AG04450 (cell line): ENCODE measurements at regions of chr15 and their contacts with region 1.

Region 1: DNA sequence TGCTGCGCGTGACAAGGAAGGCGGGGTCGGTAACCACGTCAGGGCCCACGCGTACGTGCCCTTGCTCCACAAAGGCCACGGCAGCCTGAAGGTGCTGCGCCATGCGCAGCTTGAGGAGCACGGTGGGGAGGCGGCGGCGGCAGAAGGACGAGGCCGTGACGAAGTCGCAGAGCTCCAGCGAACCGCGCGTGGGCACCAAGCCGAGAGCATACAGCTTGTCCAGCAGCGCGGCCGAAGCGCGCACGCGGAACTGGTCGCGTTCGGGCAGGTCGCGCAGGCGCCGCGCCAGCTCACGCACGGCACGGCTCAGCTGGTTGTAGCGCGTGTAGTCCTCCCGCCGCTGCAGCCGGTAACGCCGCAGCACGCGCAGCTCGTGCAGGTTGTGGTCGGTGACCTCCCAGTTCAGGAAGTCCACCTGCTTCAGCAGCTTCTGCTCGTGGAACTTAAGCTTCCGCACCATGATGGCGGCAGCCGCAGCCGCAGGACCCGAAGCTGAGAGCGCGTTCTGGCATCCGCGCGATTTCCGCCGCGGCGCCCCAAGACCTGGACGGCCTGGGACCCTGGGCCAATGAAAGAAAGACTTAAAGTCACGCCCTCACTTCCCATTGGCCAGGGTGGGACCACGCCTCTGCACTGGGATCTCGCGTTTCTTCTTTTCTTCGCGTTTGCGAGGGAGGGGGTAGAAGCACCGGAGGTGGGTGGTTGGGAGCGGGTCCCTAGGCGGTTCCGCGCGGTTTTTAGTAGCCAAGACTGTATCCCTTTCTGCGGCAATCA is at the start of gene IMP3:
- DNase-seq: peak; percentile 85
- H3K4me3 ChIP-seq: peak within 1 kb of the TSS; percentile 98
- H3K27ac ChIP-seq: peak within 1 kb of the TSS; percentile 85
- H3K27me3 ChIP-seq: no peaks in the 10 kb centered on the region
- CTCF ChIP-seq: no peak
- polyA plus RNA-seq, gene IMP3: 38.9 and 42.3 TPM in 2 replicates

Region 2: GRCh38 chr15:75597667-75598341 is 42.1 kb before region 1 on chr15:
- CTCF ChIA-PET with region 1: no interaction called
- POLR2A ChIA-PET with region 1: no interaction called
- DNase-seq: no peak
- H3K4me3 ChIP-seq: no peak overlapping the region
- H3K27ac ChIP-seq: no peak overlapping the region
- H3K27me3 ChIP-seq: no peaks in the 10 kb centered on the region
- CTCF ChIP-seq: peak; percentile 42

Region 3: GRCh38 chr15:75625542-75626347 is 14.2 kb before region 1 on chr15 and contains the start of gene SNUPN:
- CTCF ChIA-PET with region 1: interaction called, 12 read pairs
- POLR2A ChIA-PET with region 1: interaction called, 11 read pairs
- DNase-seq: no peak
- H3K4me3 ChIP-seq: peak within 1 kb of the TSS; percentile 88
- H3K27ac ChIP-seq: peak within 1 kb of the TSS; percentile 97
- H3K27me3 ChIP-seq: no peaks in the 10 kb centered on the region
- CTCF ChIP-seq: no peak
- polyA plus RNA-seq, gene SNUPN: 31.1 and 36.6 TPM in 2 replicates

Region 4: DNA sequence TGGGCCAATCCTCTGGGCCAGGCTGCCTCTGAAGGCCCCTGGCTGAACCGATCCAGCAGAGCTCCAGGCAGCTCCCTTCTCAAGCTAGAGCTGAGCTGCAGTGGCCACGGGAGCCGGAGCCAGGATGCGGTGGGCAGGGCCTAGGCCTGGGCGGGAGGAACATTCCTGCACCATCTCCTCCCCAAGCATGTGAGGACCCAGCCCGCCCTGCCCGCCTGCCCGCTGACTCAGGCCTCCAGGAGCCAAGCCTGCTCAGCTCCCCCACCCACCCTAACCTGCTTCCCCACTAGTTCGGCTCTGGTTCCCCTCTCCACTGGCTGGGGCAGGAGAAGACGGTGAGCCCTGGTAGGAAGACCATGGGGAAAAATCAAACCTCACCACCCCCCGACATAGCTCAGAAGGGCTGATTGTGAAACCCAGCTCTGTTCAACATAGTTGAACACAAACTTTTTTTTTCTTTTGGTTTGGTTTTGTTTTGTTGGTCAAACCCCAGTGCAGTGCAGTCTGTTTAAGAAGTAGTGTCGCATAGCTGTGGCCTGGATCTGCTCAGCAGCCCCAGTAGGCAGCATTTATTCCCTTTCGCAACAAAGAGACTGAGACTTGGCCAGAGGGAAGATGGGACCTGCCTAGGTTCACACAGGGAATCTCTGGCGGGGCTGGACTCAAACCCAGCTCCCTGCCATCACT is 21.3 kb after region 1 on chr15:
- CTCF ChIA-PET with region 1: interaction called, 8 read pairs
- POLR2A ChIA-PET with region 1: interaction called, 10 read pairs
- DNase-seq: peak; percentile 81
- H3K4me3 ChIP-seq: peak overlapping the region; percentile 29
- H3K27ac ChIP-seq: peak overlapping the region; percentile 98
- H3K27me3 ChIP-seq: no peaks in the 10 kb centered on the region
- CTCF ChIP-seq: no peak

Region 5: DNA sequence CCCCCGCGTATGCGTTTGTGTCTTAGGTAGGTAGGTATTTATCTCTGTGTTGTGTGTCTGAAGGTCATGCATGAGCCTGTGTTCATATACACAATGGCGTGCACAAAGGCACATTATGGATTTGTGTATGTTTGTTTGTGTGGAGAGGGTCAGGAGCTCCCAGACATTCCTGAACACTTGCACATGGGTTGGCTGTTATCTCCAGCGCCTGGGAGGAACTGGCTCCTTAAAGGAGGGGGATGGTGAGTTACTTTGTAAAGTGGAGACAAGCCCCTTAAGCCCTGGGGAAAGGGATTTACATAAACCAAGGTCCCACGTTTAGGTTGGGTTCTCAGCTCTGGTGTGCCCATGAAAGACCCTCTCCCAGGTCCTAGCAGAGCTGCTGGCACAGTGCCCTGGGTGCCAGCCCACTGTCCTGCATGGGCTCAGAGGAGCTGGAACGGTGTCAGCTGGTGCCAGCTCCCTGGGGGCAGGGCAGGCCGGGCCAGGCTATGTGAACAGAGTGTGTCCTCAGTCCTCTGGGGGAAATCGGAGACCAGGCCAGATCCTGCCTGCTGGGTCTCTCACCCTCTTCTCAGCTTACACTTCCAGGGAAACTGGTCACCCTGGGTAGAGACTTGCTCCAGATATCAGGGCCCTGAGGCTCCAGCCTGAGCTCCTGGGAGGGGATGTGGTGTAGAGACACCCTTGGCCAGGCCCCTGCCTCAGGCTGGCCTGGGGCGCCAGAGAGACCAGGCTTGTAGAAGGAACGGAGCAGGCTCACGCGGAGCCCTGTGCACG is 32.9 kb after region 1 on chr15:
- CTCF ChIA-PET with region 1: interaction called, 5 read pairs
- POLR2A ChIA-PET with region 1: interaction called, 26 read pairs
- DNase-seq: peak; percentile 56
- H3K4me3 ChIP-seq: no peak overlapping the region
- H3K27ac ChIP-seq: peak overlapping the region; percentile 87
- H3K27me3 ChIP-seq: no peaks in the 10 kb centered on the region
- CTCF ChIP-seq: no peak

Region 6: DNA sequence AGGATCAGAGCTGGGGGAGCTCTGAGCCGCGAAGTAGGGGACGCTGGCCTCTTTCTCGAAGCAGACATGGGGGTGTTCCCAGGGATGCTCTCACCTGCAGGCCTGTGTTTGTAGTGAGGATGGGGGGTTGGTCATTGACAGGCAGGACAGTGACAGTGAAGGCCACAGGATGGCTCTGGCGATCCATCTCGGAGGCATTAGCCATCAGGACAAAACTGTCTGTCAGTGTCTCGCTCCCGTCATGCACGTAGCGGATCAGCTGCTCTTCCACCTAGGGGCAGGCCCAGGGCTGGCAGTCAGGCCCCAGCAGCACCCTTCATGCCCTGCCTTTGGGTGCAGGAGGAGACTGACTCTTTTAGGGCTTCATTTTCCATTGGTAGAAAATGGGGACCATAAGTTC is 44.7 kb after region 1 on chr15:
- CTCF ChIA-PET with region 1: interaction called, 10 read pairs
- POLR2A ChIA-PET with region 1: no interaction called
- DNase-seq: no peak
- H3K4me3 ChIP-seq: no peak overlapping the region
- H3K27ac ChIP-seq: no peak overlapping the region
- H3K27me3 ChIP-seq: no peaks in the 10 kb centered on the region
- CTCF ChIP-seq: no peak

Region 7: DNA sequence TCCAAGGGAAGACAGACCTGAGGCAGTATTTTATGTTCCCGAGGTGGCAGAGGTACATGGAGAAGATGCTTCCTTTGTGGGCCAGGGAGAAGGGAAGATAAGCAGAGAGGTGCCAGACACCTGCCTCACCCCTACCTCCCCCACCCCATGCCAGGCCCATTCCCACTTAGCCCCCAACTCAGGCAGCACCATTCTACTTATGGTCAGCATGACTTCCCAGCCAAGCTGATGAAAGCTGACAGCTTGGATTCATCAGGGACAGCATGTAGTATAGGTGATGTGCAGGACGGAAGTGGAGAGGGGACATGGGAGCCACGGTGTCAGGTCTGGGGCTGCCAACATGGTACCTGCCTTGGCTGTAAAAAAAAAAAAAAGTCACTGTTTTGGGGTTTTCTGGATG is 130.2 kb after region 1 on chr15:
- CTCF ChIA-PET with region 1: no interaction called
- POLR2A ChIA-PET with region 1: no interaction called
- DNase-seq: no peak
- H3K4me3 ChIP-seq: no peak overlapping the region
- H3K27ac ChIP-seq: no peak overlapping the region
- H3K27me3 ChIP-seq: peaks cover 18% of the 10 kb centered on the region
- CTCF ChIP-seq: no peak